ENCODE measurements at regions of chr1 and their contacts with region 1.

Region 1: GRCh38 chr1:231757101-231757404 is 130.5 kb downstream of the DISC1 start:
- DNase-seq: no peak
- H3K4me3 Mint-ChIP-seq: no peak overlapping the region
- H3K27ac Mint-ChIP-seq: no peak overlapping the region
- H3K4me1 Mint-ChIP-seq: no peaks in the 10 kb centered on the region
- H3K27me3 Mint-ChIP-seq: no peaks in the 10 kb centered on the region

Region 2: GRCh38 chr1:231656741-231657140 is 100.3 kb before region 1 on chr1:
- CTCF ChIA-PET with region 1: no interaction called
- DNase-seq: no peak
- H3K4me3 Mint-ChIP-seq: no peak overlapping the region
- H3K27ac Mint-ChIP-seq: no peak overlapping the region
- H3K4me1 Mint-ChIP-seq: peaks cover 29% of the 10 kb centered on the region
- H3K27me3 Mint-ChIP-seq: no peaks in the 10 kb centered on the region

Region 3: DNA sequence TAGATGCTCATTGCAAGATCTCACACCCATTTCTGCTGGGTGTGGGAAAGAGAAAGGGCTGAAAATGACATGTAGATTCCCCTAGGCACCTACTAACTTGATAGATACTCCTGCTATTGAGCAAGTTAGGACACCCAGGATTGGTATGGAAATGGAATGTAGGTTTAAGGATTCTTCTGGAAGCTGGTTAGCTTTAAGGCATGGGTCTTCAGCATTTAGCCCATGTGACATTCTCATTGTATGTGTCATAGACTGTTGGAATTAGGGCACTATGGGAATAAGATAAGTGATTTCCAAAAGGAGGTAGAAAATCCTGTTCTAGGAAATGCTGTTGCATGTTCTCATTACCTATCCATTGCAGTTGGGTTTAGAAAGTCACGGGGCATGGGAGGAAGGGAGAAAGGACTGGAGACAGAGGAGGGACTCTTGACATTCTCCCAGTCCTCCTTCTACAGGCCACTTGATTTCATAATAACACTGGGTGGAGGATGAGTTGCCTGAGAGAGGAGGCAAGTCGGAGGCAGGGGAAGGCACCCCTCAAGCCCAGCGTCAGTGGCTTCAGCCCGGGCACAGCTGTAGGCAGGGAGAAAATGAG is 54.2 kb before region 1 on chr1:
- CTCF ChIA-PET with region 1: no interaction called
- DNase-seq: no peak
- H3K4me3 Mint-ChIP-seq: no peak overlapping the region
- H3K27ac Mint-ChIP-seq: no peak overlapping the region
- H3K4me1 Mint-ChIP-seq: peaks cover 11% of the 10 kb centered on the region
- H3K27me3 Mint-ChIP-seq: no peaks in the 10 kb centered on the region

Region 4: GRCh38 chr1:231768416-231768815 is 11.4 kb after region 1 on chr1:
- CTCF ChIA-PET with region 1: interaction called, 14 read pairs
- DNase-seq: no peak
- H3K4me3 Mint-ChIP-seq: no peak overlapping the region
- H3K27ac Mint-ChIP-seq: no peak overlapping the region
- H3K4me1 Mint-ChIP-seq: no peaks in the 10 kb centered on the region
- H3K27me3 Mint-ChIP-seq: no peaks in the 10 kb centered on the region

Region 5: GRCh38 chr1:231806623-231807495 is 49.8 kb after region 1 on chr1:
- CTCF ChIA-PET with region 1: interaction called, 18 read pairs
- DNase-seq: peak; percentile 43
- H3K4me3 Mint-ChIP-seq: no peak overlapping the region
- H3K27ac Mint-ChIP-seq: no peak overlapping the region
- H3K4me1 Mint-ChIP-seq: no peaks in the 10 kb centered on the region
- H3K27me3 Mint-ChIP-seq: no peaks in the 10 kb centered on the region